Endothelial cell of umbilical vein (primary cell): ENCODE measurements at regions of chr7 and their contacts with region 1.

Region 1: GRCh38 chr7:21317966-21318915 is 109.6 kb upstream of the SP4 start:
- DNase-seq: peak; percentile 89
- H3K4me3 ChIP-seq: peak overlapping the region in 1 of 3 experiments; percentile 19
- H3K27ac ChIP-seq: peak overlapping the region; percentile 96
- H3K4me1 ChIP-seq: peaks cover 44% of the 10 kb centered on the region
- H3K27me3 ChIP-seq: no peaks in the 10 kb centered on the region
- CTCF ChIP-seq: no peak
- POLR2A ChIP-seq: no peak

Region 2: GRCh38 chr7:20786779-20787659 is 531.2 kb before region 1 on chr7 and contains the start of gene SP8:
- CTCF ChIA-PET with region 1: no interaction called
- POLR2A ChIA-PET with region 1: no interaction called
- dilution Hi-C with region 1: no loop called
- intact Hi-C with region 1: loop called (anchors 5 kb)
- DNase-seq: peak; percentile 51
- H3K4me3 ChIP-seq: peak within 1 kb of the TSS; percentile 23 to 66 (median 38)
- H3K27ac ChIP-seq: no peak within 1 kb of the TSS
- H3K4me1 ChIP-seq: peaks cover 19% of the 10 kb centered on the region
- H3K27me3 ChIP-seq: peaks cover 74 to 97% of the 10 kb centered on the region in 2 experiments
- CTCF ChIP-seq: no peak
- POLR2A ChIP-seq: no peak
- total RNA-seq, gene SP8: 0.38 and 2.5 TPM in 2 replicates

Region 3: GRCh38 chr7:21300692-21301091 is 17.5 kb before region 1 on chr7:
- CTCF ChIA-PET with region 1: no interaction called
- POLR2A ChIA-PET with region 1: no interaction called
- dilution Hi-C with region 1: no loop called
- intact Hi-C with region 1: loop called (anchors 2 kb)
- DNase-seq: no peak
- H3K4me3 ChIP-seq: no peak overlapping the region
- H3K27ac ChIP-seq: no peak overlapping the region
- H3K4me1 ChIP-seq: peaks cover 10% of the 10 kb centered on the region
- H3K27me3 ChIP-seq: no peaks in the 10 kb centered on the region
- CTCF ChIP-seq: peak; percentile 11 to 41
- POLR2A ChIP-seq: no peak

Region 4: GRCh38 chr7:21365866-21366624 is 47.8 kb after region 1 on chr7:
- CTCF ChIA-PET with region 1: interaction called, 3 read pairs
- POLR2A ChIA-PET with region 1: no interaction called
- dilution Hi-C with region 1: no loop called
- intact Hi-C with region 1: loop called (anchors 1 kb)
- DNase-seq: peak; percentile 92
- H3K4me3 ChIP-seq: no peak overlapping the region
- H3K27ac ChIP-seq: peak overlapping the region; percentile 83
- H3K4me1 ChIP-seq: peaks cover 17% of the 10 kb centered on the region
- H3K27me3 ChIP-seq: no peaks in the 10 kb centered on the region
- CTCF ChIP-seq: no peak
- POLR2A ChIP-seq: no peak

Region 5: GRCh38 chr7:23013715-23014649 is 1695.7 kb after region 1 on chr7 and contains the start of gene HYCC1:
- CTCF ChIA-PET with region 1: no interaction called
- POLR2A ChIA-PET with region 1: no interaction called
- dilution Hi-C with region 1: no loop called
- intact Hi-C with region 1: loop called (anchors 10 kb)
- DNase-seq: peak; percentile 99
- H3K4me3 ChIP-seq: peak within 1 kb of the TSS; percentile 66 to 94 (median 71)
- H3K27ac ChIP-seq: peak within 1 kb of the TSS; percentile 20
- H3K4me1 ChIP-seq: peaks cover 47% of the 10 kb centered on the region
- H3K27me3 ChIP-seq: no peaks in the 10 kb centered on the region
- CTCF ChIP-seq: peak; percentile 59 to 72
- POLR2A ChIP-seq: peak; percentile 96
- total RNA-seq, gene HYCC1: 43.2 and 51.8 TPM in 2 replicates